ENCODE measurements at regions of chr14 and their contacts with region 1.

Region 1: GRCh38 chr14:31286456-31287293 is 79.1 kb upstream of the HECTD1 start:
- H3K4me3 ChIP-seq: no peak overlapping the region
- H3K27ac ChIP-seq: no peak overlapping the region
- H3K4me1 ChIP-seq: no peaks in the 10 kb centered on the region
- CTCF ChIP-seq: no peak

Region 2: DNA sequence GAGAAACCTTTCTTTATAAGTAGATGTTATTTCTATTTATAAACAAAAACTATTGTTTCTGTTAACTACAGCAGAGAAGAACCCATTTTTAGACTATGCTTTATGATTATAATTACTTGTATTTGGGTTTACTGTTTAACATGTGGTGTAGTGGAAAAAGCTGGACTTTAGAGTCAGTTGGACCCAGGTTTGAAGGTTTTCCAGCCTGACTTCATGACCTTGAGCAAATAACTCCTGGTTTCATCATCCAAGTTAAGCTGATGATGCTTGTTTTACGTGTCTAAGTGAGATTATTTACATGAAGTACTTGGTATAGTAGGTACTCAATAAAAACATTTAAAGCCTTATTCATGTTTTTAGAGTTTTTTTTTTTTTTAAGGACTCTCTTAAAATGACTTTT is 568.6 kb after region 1 on chr14:
- CTCF ChIA-PET with region 1: no interaction called
- POLR2A ChIA-PET with region 1: interaction called, 11 read pairs
- H3K4me3 ChIP-seq: no peak overlapping the region
- H3K27ac ChIP-seq: no peak overlapping the region
- H3K4me1 ChIP-seq: no peaks in the 10 kb centered on the region
- CTCF ChIP-seq: no peak